ENCODE measurements at regions of chr14 and their contacts with region 1.

Region 1: DNA sequence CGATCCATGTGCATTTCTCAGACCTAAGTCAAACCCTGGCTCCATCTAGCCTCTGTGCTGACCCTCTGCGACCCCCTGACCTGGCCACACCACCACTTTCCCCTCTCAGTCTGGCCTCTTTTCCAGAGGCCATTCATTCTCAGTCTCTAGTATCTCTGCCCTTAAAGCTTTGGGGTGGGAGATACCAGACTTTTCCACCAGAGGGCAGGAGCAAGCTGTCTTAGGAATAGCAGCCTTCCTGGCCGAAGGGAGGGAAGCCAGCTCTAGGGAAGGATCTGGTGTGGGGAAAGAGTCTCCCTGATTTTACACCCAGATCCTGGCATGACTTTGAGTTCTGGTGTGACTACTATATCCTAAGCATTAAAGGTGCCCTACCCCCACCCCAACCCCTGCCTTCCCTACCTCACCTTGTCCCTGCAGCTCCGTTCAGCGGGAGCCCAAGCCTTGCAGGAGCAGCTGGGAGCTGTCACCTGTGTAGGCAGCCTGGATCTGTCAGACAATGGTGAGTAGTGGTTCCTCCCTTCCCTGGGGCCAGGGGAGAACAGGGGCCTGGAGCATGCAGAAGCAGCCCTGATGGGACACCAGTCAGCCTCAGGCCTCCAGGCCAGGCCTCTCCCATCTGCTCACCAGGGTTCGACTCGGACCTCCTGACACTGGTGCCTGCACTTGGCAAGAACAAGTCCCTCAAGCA is 6.6 kb downstream of the CARMIL3 start:
- DNase-seq: peak in 1 of 2 donors; percentile 86
- H3K4me3 ChIP-seq: no peak overlapping the region
- H3K27ac ChIP-seq: no peak overlapping the region
- H3K4me1 ChIP-seq: no peaks in the 10 kb centered on the region
- H3K27me3 ChIP-seq: no peaks in the 10 kb centered on the region
- CTCF ChIP-seq: peak; percentile 61 to 92 (median 91)

Region 2: GRCh38 chr14:24108336-24108874 is 50.0 kb after region 1 on chr14:
- intact Hi-C with region 1: loop called (anchors 1 kb)
- DNase-seq: no peak
- H3K4me3 ChIP-seq: no peak overlapping the region
- H3K27ac ChIP-seq: no peak overlapping the region
- H3K4me1 ChIP-seq: peaks cover 0 to 6% of the 10 kb centered on the region in 2 donors
- H3K27me3 ChIP-seq: no peaks in the 10 kb centered on the region
- CTCF ChIP-seq: no peak